Activated CD8-positive, alpha-beta T cell treated with anti-CD3 and anti-CD28 coated beads, Interleukin-2, amount 10 ng/mL, durations not matched to agents 7 days and 5 days (primary cell): ENCODE measurements at regions of chr9 and their contacts with region 1.

Region 1: DNA sequence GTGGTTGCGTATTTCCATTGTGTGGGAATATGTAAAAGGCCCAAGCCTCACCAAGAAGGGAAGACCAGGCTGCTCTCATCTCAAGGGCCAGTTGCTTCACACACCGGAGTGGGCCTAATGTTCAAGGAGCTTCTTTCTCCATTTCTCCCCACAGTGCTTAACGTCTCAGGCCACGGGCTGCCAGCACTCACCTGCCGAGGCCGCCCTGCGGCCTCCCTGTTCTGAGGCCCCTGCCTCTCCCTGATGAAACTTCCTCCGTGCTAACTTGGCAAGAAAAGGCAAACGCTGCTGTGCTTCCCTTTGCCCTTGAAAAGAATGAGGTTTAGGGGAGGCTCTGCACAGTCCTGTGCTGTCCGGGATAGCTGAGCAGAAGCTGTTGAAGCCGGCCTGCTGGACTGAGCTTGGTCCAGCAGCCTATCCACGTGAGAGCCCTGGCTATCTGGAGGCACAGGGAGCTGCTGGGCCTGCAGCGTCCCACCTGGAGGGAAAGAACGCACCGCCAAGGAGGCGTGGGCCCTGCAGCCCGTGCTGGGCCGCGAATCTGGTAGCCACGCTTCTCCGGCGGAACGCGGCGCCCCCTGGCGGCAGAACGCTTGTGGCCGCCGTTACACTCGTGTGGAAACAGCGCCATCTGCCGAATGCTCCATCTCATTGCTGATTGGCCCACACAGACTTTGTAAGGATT is 73.5 kb upstream of the PRSS3 start:
- DNase-seq: peak; percentile 90
- ATAC-seq: peak; percentile 84
- H3K4me3 Mint-ChIP-seq: no peak overlapping the region
- H3K27ac Mint-ChIP-seq: no peak overlapping the region
- H3K4me1 Mint-ChIP-seq: peaks cover 7% of the 10 kb centered on the region
- H3K27me3 Mint-ChIP-seq: peaks cover 31% of the 10 kb centered on the region

Region 2: GRCh38 chr9:33498387-33498786 is 223.4 kb before region 1 on chr9:
- CTCF ChIA-PET with region 1: no interaction called
- POLR2A ChIA-PET with region 1: no interaction called
- DNase-seq: no peak
- ATAC-seq: no peak
- H3K4me3 Mint-ChIP-seq: no peak overlapping the region
- H3K27ac Mint-ChIP-seq: no peak overlapping the region
- H3K4me1 Mint-ChIP-seq: no peaks in the 10 kb centered on the region
- H3K27me3 Mint-ChIP-seq: peaks cover 7% of the 10 kb centered on the region

Region 3: GRCh38 chr9:33623658-33624586 is 97.9 kb before region 1 on chr9:
- CTCF ChIA-PET with region 1: interaction called, 226 read pairs
- POLR2A ChIA-PET with region 1: interaction called, 3 read pairs
- DNase-seq: peak; percentile 79
- ATAC-seq: peak; percentile 98
- H3K4me3 Mint-ChIP-seq: no peak overlapping the region
- H3K27ac Mint-ChIP-seq: no peak overlapping the region
- H3K4me1 Mint-ChIP-seq: peaks cover 3% of the 10 kb centered on the region
- H3K27me3 Mint-ChIP-seq: peaks cover 28% of the 10 kb centered on the region

Region 4: GRCh38 chr9:33628865-33629410 is 92.9 kb before region 1 on chr9:
- CTCF ChIA-PET with region 1: interaction called, 226 read pairs
- POLR2A ChIA-PET with region 1: interaction called, 3 read pairs
- DNase-seq: no peak
- ATAC-seq: no peak
- H3K4me3 Mint-ChIP-seq: no peak overlapping the region
- H3K27ac Mint-ChIP-seq: no peak overlapping the region
- H3K4me1 Mint-ChIP-seq: peaks cover 3% of the 10 kb centered on the region
- H3K27me3 Mint-ChIP-seq: peaks cover 40% of the 10 kb centered on the region

Region 5: DNA sequence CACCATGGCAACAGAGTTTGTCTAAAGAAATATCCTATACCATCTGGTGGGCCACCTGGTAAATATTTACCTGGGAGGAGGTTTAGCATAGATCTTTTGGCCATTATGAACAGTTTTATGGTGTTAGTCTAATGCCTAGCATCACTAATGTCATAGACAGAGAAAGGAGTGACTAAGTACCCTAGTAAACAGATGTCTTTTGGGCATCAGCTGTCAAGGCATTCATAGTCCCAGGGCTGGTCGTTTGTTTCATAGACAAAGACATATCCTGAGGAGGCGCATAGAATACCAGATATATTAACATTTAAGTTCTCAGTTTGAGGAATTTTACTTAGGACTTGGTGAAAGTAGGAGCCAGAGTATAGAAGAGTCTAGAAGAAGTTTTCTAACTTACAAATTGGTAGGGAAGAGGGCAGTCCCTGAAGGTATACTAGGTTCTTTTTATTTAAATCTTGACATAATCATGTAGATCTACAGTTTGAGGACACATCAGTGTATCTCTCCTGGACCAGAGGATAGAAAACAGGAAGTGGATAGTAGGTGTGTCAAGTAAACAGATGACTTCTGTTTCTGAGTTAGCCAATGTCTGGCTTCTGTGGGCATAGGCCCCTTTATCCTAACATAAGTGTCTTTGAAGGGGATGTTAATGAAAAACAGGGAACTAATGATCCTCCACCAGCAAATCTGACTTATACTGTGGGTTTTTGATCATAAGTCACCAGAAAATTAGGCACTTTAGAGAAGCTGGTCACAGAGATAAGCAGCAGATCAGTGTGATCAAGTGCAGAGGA is 31.5 kb before region 1 on chr9:
- CTCF ChIA-PET with region 1: interaction called, 11 read pairs
- POLR2A ChIA-PET with region 1: no interaction called
- DNase-seq: no peak
- ATAC-seq: no peak
- H3K4me3 Mint-ChIP-seq: no peak overlapping the region
- H3K27ac Mint-ChIP-seq: no peak overlapping the region
- H3K4me1 Mint-ChIP-seq: peaks cover 8% of the 10 kb centered on the region
- H3K27me3 Mint-ChIP-seq: peaks cover 43% of the 10 kb centered on the region

Region 6: GRCh38 chr9:33737811-33738606 is 16.2 kb after region 1 on chr9:
- CTCF ChIA-PET with region 1: interaction called, 19 read pairs
- POLR2A ChIA-PET with region 1: no interaction called
- DNase-seq: peak; percentile 56
- ATAC-seq: peak; percentile 60
- H3K4me3 Mint-ChIP-seq: no peak overlapping the region
- H3K27ac Mint-ChIP-seq: no peak overlapping the region
- H3K4me1 Mint-ChIP-seq: no peaks in the 10 kb centered on the region
- H3K27me3 Mint-ChIP-seq: peaks cover 30% of the 10 kb centered on the region

Region 7: GRCh38 chr9:34035656-34036055 is 313.8 kb after region 1 on chr9:
- CTCF ChIA-PET with region 1: no interaction called
- POLR2A ChIA-PET with region 1: no interaction called
- DNase-seq: no peak
- ATAC-seq: no peak
- H3K4me3 Mint-ChIP-seq: no peak overlapping the region
- H3K27ac Mint-ChIP-seq: no peak overlapping the region
- H3K4me1 Mint-ChIP-seq: peaks cover 10% of the 10 kb centered on the region
- H3K27me3 Mint-ChIP-seq: no peaks in the 10 kb centered on the region